Breast epithelium (tissue), 4 donors: ENCODE measurements at regions of chr2 and their contacts with region 1.

Region 1: DNA sequence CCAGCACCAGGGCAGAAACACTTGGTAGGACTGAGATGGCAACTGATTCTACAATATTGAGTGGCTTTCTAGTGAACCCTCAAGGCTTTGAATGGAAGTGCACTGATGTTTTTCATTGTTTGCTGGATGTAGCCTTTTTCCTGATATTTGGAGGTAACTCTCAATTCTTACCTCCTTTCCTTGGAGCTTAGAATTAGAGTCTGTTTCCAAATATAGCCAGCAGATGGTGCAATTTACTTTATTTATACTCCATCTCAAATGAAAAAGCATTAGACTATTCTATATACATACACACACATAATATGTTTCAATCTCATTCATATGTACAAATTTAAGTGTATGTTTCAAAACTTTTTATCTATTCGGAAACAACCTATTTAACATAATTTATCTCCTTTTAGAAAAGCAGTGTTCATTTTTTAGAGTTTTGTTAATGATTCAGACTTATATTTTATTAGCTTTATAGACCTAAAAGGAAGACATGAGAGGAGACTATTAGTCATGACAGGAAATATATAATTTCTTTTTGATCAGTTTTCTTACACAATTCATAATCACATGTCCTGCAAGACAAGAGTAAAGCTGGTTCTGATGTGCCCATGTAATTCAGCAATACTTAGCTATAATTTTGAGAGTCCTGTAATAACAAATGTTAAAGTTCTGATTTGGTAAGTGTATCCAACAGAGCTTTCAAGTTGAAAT is 124.8 kb downstream of the NUP35 start:
- DNase-seq: no peak
- H3K4me3 ChIP-seq: no peak overlapping the region
- H3K27ac ChIP-seq: no peak overlapping the region
- H3K4me1 ChIP-seq: no peaks in the 10 kb centered on the region
- H3K27me3 ChIP-seq: no peaks in the 10 kb centered on the region
- CTCF ChIP-seq: peak in 1 of 3 donors; percentile 38
- POLR2A ChIP-seq: no peak

Region 2: GRCh38 chr2:184906709-184907108 is 1657.7 kb after region 1 on chr2:
- intact Hi-C with region 1: loop called (anchors 10 kb)
- DNase-seq: no peak
- H3K4me3 ChIP-seq: no peak overlapping the region
- H3K27ac ChIP-seq: no peak overlapping the region
- H3K4me1 ChIP-seq: no peaks in the 10 kb centered on the region
- H3K27me3 ChIP-seq: no peaks in the 10 kb centered on the region
- CTCF ChIP-seq: no peak
- POLR2A ChIP-seq: no peak